Heart right ventricle (tissue), 16 donors: ENCODE measurements at regions of chr15 and their contacts with region 1.

Region 1: DNA sequence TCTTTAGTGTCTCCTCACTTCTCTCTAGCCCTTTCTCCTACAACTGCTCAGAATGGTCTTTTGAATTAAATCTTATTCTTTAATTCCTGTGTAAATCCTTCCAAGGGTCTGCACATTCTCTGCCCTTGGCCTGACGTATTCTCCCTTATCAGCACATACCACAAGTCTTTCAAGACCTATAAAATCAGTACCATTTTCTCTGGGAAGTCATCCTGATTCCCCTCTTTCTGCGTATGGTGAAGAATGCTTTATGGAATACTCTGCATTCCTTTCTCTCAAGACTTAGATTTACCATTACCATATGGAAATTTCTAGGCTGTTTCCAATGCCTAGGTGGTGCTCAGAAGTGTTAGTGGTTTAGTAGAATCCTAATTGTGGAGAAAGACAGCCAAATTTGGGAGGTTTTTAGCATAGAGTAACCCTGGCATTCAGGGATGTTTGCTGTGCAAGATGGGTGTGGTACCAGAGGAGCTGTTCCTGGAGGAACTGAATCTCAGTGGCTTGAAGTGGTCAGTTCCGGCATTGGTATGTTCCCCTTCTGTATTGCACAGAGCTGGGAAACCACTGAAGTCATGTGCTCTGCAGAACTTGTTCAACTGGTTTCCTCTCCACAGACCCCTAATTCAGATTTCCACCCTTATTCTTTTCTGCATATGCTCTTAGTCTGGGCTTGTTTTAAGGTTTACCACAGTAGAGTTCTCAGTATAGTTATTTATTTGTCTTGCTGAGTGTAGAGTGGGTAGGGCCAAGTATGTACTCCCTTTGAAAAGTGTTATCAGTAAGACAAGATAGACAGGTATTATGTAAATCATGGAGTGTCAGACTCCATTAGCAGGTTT is 24.5 kb downstream of the IQGAP1 start:
- DNase-seq: no peak
- ATAC-seq: peak; percentile 62 to 91 (median 84)
- H3K4me3 ChIP-seq: peak overlapping the region in 2 of 10 donors; percentile 3 to 22
- H3K27ac ChIP-seq: peak overlapping the region in 4 of 10 donors; percentile 28 to 77 (median 55)
- H3K4me1 ChIP-seq: peaks cover 12 to 73% (median 55%) of the 10 kb centered on the region in 9 donors
- H3K27me3 ChIP-seq: no peaks in the 10 kb centered on the region
- CTCF ChIP-seq: no peak

Region 2: DNA sequence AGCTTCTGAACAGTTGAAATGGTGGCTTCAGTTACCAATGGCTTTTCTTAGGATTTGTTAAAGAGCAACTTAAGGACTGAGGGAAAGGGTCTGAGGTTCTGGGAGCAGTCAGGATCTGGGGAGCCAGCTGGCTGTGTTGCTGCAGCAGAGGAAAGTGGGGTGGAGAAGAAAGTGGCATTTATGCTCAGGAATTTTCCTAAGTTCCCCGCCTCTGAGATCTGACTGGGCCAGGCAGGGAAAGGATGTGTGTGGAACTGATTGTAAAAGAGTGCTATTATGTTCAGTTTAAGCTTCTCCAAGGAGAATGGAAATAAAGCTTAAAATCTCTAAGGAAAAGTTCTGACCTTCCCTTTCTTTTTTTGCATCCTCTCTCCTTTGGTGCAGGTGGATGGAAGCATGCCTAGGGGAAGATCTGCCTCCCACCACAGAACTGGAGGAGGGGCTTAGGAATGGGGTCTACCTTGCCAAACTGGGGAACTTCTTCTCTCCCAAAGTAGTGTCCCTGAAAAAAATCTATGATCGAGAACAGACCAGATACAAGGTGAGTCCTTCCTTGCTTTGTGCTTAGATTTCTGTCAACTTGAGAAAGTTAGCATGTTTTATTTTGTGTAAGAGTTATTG is 13.3 kb after region 1 on chr15:
- intact Hi-C with region 1: loop called in 1 of 10 experiments (anchors 2 kb)
- DNase-seq: no peak
- ATAC-seq: peak in 2 of 8 donors; percentile 33 to 41
- H3K4me3 ChIP-seq: no peak overlapping the region
- H3K27ac ChIP-seq: peak overlapping the region in 1 of 10 donors; percentile 19
- H3K4me1 ChIP-seq: peaks cover 8 to 56% (median 53%) of the 10 kb centered on the region in 9 donors
- H3K27me3 ChIP-seq: no peaks in the 10 kb centered on the region
- CTCF ChIP-seq: no peak

Region 3: DNA sequence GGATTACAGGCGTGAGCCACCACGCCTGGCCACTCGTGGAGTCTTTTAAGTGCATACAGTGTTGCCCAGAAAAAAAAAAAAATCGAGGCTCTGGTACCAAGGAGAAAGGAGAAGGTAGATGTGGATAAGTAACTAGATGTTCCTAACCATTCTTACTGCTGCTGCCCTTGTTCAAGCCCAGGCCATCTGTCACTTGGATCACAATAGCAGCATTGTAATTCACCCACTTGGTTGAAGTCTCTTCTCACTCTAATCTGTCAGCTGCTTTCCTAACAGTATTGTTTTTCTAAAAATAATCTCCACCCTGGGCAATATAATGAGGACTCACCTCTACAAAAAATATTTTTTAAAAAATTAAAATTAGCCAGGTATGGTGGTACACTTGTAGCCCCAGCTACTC is 59.2 kb after region 1 on chr15:
- intact Hi-C with region 1: no loop called
- DNase-seq: no peak
- ATAC-seq: no peak
- H3K4me3 ChIP-seq: no peak overlapping the region
- H3K27ac ChIP-seq: peak overlapping the region in 1 of 10 donors; percentile 15
- H3K4me1 ChIP-seq: peaks cover 0 to 25% (median 5%) of the 10 kb centered on the region in 9 donors
- H3K27me3 ChIP-seq: no peaks in the 10 kb centered on the region
- CTCF ChIP-seq: no peak